ENCODE measurements at regions of chr6 and their contacts with region 1.

Region 1: DNA sequence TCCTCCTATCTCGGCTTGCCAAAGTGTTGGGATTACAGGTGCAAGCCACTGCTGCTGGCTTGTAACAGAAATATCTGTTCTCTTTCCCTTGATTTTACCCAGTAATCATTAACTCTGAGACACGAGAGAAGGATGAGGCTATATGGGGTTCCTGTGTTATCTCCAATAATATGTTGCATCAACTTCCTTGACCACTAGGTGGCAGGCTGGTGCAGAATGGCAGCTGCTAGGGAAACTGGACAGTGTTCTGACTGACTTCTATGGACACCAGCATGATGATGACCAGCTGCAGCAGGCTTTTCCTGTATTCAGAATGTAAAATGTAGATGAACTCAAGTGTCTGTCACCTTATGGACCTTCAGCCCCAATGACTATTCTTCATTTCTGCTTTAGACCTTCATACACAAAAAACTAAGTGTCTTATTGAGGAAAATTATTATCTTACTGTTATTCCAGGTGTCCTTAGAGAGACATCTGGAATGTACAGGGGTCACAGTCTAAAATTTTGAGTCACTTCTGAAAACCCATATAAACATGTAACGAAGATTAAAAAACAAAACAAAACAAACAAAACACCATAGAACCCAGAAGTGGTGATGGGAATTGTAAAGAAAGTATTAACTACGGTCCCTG is 20.4 kb upstream of the CD109 start:
- DNase-seq: peak; percentile 66 to 85 (median 76)
- ATAC-seq: peak; percentile 97
- H3K4me3 ChIP-seq: no peak overlapping the region
- H3K27ac ChIP-seq: no peak overlapping the region
- H3K4me1 ChIP-seq: no peaks in the 10 kb centered on the region
- H3K27me3 ChIP-seq: peaks cover 3 to 6% of the 10 kb centered on the region in 2 experiments; a peak in 4 of 5 replicates
- CTCF ChIP-seq: peak; percentile 84 to 90 (median 88)
- EP300 ChIP-seq: no peak
- POLR2A ChIP-seq: no peak
- RAD21 ChIP-seq: peak; percentile 75 to 85

Region 2: GRCh38 chr6:73719046-73719445 is 43.5 kb after region 1 on chr6:
- CTCF ChIA-PET with region 1: interaction called, 4 read pairs
- POLR2A ChIA-PET with region 1: no interaction called
- in situ Hi-C with region 1: no loop called
- intact Hi-C with region 1: loop called (anchors 5 kb)
- DNase-seq: no peak
- ATAC-seq: no peak
- H3K4me3 ChIP-seq: no peak overlapping the region
- H3K27ac ChIP-seq: no peak overlapping the region
- H3K4me1 ChIP-seq: no peaks in the 10 kb centered on the region
- H3K27me3 ChIP-seq: peaks cover 0 to 2% of the 10 kb centered on the region in 2 experiments; a peak in 2 of 5 replicates
- CTCF ChIP-seq: no peak
- EP300 ChIP-seq: no peak
- POLR2A ChIP-seq: no peak
- RAD21 ChIP-seq: no peak

Region 3: DNA sequence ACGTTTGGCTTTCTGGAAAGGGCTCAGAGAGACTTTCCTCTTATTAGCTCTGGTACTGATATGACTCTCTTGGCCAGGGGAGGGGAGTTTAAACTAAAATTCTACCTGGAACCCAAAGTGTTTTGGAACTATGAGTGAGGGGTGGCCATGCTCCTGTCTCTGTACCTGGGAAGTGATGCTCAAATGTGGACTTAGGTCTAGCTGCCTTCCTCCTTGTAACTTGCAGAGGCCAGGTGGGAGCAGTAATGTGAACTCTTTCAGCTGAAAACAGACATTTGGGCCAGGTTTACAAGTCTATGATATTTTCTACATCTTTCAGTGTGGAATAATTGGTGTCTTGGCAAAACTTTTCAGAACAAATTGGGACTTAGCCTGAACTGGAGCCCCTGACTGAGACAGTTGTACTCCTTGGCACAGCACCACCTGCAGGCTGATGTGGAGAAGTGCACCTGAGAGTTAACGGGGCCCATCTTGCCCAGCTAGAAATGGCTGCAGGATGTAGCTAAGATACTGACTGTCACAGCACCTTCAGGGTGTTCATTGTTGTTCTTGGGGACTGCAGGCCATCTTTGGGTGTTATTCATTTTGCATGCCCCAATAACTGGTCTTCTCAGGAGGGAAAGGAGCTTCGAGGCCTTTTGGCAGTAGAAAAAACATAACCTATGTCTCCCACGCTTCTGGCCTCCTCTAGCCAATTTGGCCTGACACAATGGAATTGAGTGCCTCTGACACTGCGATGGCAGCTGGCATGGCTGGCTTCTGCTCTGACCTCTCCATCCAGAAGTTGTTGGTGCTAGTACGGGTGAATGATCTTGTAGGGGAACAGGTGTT is 57.5 kb after region 1 on chr6:
- CTCF ChIA-PET with region 1: interaction called, 8 read pairs
- POLR2A ChIA-PET with region 1: no interaction called
- in situ Hi-C with region 1: loop called (anchors 5 kb)
- intact Hi-C with region 1: loop called (anchors 1 kb)
- DNase-seq: peak; percentile 64 to 77 (median 70)
- ATAC-seq: peak; percentile 98
- H3K4me3 ChIP-seq: no peak overlapping the region
- H3K27ac ChIP-seq: no peak overlapping the region
- H3K4me1 ChIP-seq: no peaks in the 10 kb centered on the region
- H3K27me3 ChIP-seq: no peaks in the 10 kb centered on the region
- CTCF ChIP-seq: peak; percentile 81 to 92 (median 86)
- EP300 ChIP-seq: no peak
- POLR2A ChIP-seq: no peak
- RAD21 ChIP-seq: peak; percentile 78 to 83

Region 4: GRCh38 chr6:73823046-73823735 is 147.6 kb after region 1 on chr6:
- CTCF ChIA-PET with region 1: no interaction called
- POLR2A ChIA-PET with region 1: no interaction called
- in situ Hi-C with region 1: no loop called
- intact Hi-C with region 1: loop called (anchors 10 kb)
- DNase-seq: no peak
- ATAC-seq: no peak
- H3K4me3 ChIP-seq: no peak overlapping the region
- H3K27ac ChIP-seq: no peak overlapping the region
- H3K4me1 ChIP-seq: no peaks in the 10 kb centered on the region
- H3K27me3 ChIP-seq: no peaks in the 10 kb centered on the region
- CTCF ChIP-seq: no peak
- EP300 ChIP-seq: no peak
- POLR2A ChIP-seq: no peak
- RAD21 ChIP-seq: no peak

Measured in K562 (cell line).